CD8-positive, alpha-beta T cell (primary cell): ENCODE measurements at regions of chr3 and their contacts with region 1.

Region 1: GRCh38 chr3:116198087-116198486 is 247.2 kb downstream of the LSAMP start:
- DNase-seq: no peak
- ATAC-seq: no peak
- H3K4me3 ChIP-seq: no peak overlapping the region
- H3K4me3 Mint-ChIP-seq: no peak overlapping the region
- H3K27ac ChIP-seq: no peak overlapping the region
- H3K27ac Mint-ChIP-seq: no peak overlapping the region
- H3K4me1 ChIP-seq: no peaks in the 10 kb centered on the region
- H3K4me1 Mint-ChIP-seq: no peaks in the 10 kb centered on the region
- H3K27me3 ChIP-seq: no peaks in the 10 kb centered on the region
- H3K27me3 Mint-ChIP-seq: no peaks in the 10 kb centered on the region
- CTCF ChIP-seq: no peak

Region 2: DNA sequence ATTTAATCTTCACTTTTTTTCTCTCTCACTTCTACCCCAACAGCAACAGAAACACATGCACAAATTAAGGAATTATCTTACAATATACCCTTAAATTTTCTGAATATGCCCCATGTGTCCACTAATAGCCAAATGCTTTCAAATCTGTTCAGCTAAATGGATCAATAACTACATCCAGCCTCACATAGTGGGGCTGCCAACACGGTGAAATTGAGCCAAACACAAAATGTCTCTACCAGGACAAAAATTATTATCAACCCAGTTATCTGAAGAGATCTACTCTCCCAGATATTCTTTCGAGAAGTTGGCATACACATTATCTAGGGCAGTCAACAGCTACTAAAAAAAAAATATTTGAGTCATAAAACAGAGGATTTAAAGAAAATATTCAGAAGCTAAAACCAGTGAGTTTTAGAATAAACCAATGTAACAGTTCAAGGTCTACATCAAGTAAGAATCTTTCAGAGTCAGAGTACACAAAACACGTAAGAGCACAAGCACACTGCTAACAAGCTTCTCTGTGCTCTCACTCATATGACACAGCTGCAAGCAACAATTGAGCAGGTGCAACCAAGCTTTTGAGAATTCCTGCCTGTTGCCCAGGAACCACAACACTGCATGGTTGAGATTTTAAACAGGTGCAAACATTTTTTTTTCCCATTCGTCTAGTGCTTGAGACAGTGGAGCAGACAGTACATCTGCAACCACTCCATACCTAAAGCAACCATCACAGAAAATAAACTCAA is 1298.7 kb before region 1 on chr3:
- CTCF ChIA-PET with region 1: no interaction called
- POLR2A ChIA-PET with region 1: no interaction called
- intact Hi-C with region 1: loop called in 1 of 2 experiments (anchors 10 kb)
- DNase-seq: no peak
- ATAC-seq: no peak
- H3K4me3 ChIP-seq: no peak overlapping the region
- H3K4me3 Mint-ChIP-seq: no peak overlapping the region
- H3K27ac ChIP-seq: no peak overlapping the region
- H3K27ac Mint-ChIP-seq: no peak overlapping the region
- H3K4me1 ChIP-seq: no peaks in the 10 kb centered on the region
- H3K4me1 Mint-ChIP-seq: peaks cover 17% of the 10 kb centered on the region
- H3K27me3 ChIP-seq: no peaks in the 10 kb centered on the region
- H3K27me3 Mint-ChIP-seq: no peaks in the 10 kb centered on the region
- CTCF ChIP-seq: no peak